ENCODE measurements at regions of chr5 and their contacts with region 1.

Region 1: GRCh38 chr5:155485386-155485785 is 471.8 kb downstream of the KIF4B start:
- DNase-seq: no peak
- ATAC-seq: no peak

Region 2: GRCh38 chr5:154972476-154973080 is 512.8 kb before region 1 on chr5:
- intact Hi-C with region 1: loop called (anchors 10 kb)
- DNase-seq: no peak
- ATAC-seq: peak; percentile 52

Region 3: DNA sequence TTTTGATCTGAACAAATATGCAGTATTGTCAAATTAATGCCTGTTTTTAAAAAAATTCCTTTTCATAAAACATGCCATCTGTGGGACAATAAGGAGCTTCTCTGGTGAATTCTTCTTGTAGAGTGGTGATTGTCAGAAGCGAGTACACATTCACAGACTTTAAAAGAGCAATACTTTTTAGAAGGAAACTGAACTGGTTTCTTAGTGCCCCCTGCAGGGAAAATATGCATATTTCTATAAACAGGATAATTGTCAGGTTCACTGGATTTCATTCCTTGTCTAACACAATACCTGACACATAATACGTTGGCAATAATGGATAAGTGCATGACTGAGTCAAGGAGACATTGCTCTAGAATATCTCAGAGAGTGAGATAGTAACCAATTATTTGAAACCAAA is 338.2 kb before region 1 on chr5:
- intact Hi-C with region 1: loop called (anchors 5 kb)
- DNase-seq: no peak
- ATAC-seq: no peak

Region 4: GRCh38 chr5:155193029-155193428 is 292.4 kb before region 1 on chr5:
- intact Hi-C with region 1: loop called (anchors 1 kb)
- DNase-seq: no peak
- ATAC-seq: peak; percentile 85

Region 5: DNA sequence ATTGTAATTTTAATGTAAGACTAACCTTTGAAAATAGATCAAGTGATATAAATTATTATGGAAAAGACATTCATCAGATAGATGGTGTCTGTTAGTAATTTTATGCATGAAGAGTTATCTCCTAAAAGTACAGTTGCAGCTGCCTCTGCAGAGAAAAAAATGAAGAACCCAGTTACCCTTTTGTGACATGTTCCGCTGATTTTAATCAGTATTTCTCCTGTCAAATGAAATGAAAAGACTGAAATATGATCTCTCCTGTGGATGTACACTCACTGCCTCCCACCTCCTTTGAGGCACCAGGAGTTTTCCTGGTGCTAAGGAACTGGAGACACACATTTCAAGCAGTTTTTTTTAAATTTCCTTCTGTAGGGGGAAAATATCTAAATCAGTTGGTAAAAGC is 194.4 kb before region 1 on chr5:
- intact Hi-C with region 1: loop called (anchors 10 kb)
- DNase-seq: no peak
- ATAC-seq: no peak

Region 6: GRCh38 chr5:155728146-155728856 is 242.9 kb after region 1 on chr5:
- intact Hi-C with region 1: loop called (anchors 2 kb)
- DNase-seq: peak; percentile 78
- ATAC-seq: peak; percentile 69